ENCODE measurements at regions of chrX and their contacts with region 1.

Region 1: DNA sequence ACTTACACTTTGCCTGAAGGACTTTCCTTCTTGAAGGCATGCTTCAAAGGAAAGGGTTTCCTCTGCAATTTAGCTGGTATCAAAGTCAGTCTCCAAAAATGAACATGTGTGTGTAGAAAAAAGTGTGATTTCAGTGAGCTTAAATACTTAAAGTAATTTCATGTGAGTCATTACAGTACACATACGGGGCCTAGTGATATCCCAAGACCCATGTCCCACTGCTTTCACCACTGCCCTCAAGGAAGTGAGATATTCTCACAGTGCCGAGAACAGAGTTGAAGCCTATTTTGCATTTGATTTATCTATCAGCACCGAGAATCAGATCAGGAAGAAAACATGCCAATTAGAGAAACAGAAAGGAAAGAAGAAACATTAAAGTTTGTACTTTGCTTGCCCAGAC is 61.0 kb downstream of the CHST7 start:
- DNase-seq: no peak
- ATAC-seq: peak; percentile 69
- H3K4me3 ChIP-seq: no peak overlapping the region
- H3K27ac ChIP-seq: peak overlapping the region; percentile 31
- H3K4me1 ChIP-seq: peaks cover 39% of the 10 kb centered on the region
- H3K27me3 ChIP-seq: no peaks in the 10 kb centered on the region
- CTCF ChIP-seq: no peak
- EP300 ChIP-seq: peak in 1 of 2 experiments; percentile 45; a peak in 1 of 4 replicates
- POLR2A ChIP-seq: no peak
- RAD21 ChIP-seq: no peak

Region 2: GRCh38 chrX:46144566-46144965 is 490.0 kb before region 1 on chrX:
- CTCF ChIA-PET with region 1: no interaction called
- POLR2A ChIA-PET with region 1: no interaction called
- RAD21 ChIA-PET with region 1: no interaction called
- SMC1A ChIA-PET with region 1: no interaction called
- in situ Hi-C with region 1: no loop called
- intact Hi-C with region 1: no loop called
- DNase-seq: no peak
- ATAC-seq: no peak
- H3K4me3 ChIP-seq: no peak overlapping the region
- H3K27ac ChIP-seq: no peak overlapping the region
- H3K4me1 ChIP-seq: no peaks in the 10 kb centered on the region
- H3K27me3 ChIP-seq: no peaks in the 10 kb centered on the region
- CTCF ChIP-seq: no peak
- EP300 ChIP-seq: no peak
- POLR2A ChIP-seq: no peak
- RAD21 ChIP-seq: no peak

Region 3: DNA sequence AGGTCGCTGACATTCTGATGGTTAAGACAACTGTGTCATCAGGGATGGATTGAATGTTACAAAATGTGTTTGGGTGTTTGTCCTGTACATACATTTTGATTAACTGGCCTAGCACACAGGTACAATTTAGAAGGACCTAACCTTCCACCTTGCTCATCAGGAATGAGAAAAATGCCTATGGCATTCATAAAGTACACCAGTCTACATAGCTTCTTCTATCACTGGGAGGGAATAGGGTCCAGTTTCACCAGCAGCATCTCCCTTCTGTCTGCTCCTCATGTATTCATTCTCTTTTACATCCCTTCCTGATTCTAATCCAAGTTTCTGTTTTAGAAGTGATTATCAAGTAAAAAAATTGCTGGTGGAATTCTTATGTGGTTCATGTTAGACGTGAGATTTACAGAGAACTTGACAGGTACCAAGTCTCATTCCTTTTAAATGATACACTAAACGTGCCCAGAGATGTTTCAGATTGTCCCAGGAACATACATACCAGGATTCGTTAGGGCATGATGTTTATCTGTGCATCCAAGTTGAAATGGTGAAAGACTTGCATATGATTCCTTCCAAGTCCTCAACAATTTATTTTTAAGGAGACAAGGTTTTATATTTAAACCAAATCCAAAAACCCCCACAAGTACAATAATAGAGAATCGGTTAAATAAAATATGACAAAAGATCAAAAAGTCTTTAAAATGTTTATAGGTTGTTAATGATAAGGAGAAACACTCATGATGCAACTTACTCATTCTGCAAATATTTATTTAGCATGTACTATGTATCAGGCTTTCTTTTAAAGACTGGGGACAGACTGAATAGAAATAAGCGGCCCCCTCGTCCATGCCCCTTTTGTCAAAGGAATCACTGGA is 448.4 kb before region 1 on chrX:
- CTCF ChIA-PET with region 1: no interaction called
- POLR2A ChIA-PET with region 1: no interaction called
- RAD21 ChIA-PET with region 1: no interaction called
- SMC1A ChIA-PET with region 1: no interaction called
- in situ Hi-C with region 1: no loop called
- intact Hi-C with region 1: no loop called
- DNase-seq: no peak
- ATAC-seq: no peak
- H3K4me3 ChIP-seq: no peak overlapping the region
- H3K27ac ChIP-seq: no peak overlapping the region
- H3K4me1 ChIP-seq: no peaks in the 10 kb centered on the region
- H3K27me3 ChIP-seq: no peaks in the 10 kb centered on the region; a peak in 1 of 4 replicates
- CTCF ChIP-seq: no peak
- EP300 ChIP-seq: no peak
- POLR2A ChIP-seq: no peak
- RAD21 ChIP-seq: no peak

Region 4: DNA sequence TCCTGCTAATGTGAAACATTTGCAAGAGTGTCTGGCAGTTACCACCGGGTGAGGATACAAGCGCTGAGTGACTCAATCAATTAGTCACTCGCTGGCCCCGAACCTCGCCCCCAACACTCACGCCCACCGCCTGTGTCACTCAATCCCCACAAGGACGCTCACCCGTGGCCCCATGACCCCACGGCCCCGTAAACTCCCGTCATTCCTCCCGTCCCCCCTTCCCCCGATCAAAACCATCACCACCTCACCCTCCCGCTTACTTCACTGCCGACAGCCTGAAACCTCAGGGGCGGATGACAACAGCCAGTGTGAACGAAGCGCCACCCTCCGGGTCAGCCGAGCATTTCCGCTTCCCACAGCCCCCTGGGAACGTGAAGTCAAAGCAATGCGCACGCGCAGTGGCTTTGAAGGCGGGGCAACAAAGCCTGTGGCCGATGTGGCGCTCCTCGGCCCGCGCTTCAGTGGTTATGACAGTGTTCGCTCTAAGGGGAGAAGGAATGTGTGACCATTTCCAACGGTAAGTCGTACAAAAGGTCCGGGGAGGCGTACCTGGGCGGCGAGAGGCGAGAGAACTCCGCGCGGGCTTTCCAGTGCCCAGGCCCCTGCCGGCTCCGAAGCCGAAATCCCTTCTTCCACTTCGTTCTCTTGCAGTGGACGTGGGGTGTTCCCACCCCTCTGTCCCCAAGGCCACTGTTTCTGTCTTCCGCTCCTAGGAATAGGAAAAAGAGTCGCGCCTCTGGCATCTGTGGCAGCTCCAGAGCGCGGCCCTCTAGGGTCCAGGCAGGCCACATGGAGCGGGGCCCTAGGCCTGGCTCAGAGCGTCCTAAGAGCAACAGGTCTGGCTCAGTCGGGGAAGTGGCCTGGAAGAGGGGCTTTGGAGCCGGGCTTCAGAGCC is 89.2 kb before region 1 on chrX and contains the start of gene ZNF674:
- CTCF ChIA-PET with region 1: no interaction called
- POLR2A ChIA-PET with region 1: no interaction called
- RAD21 ChIA-PET with region 1: no interaction called
- SMC1A ChIA-PET with region 1: no interaction called
- in situ Hi-C with region 1: no loop called
- intact Hi-C with region 1: no loop called
- DNase-seq: peak; percentile 75
- ATAC-seq: peak; percentile 91
- H3K4me3 ChIP-seq: peak within 1 kb of the TSS; percentile 75
- H3K27ac ChIP-seq: peak within 1 kb of the TSS; percentile 86
- H3K4me1 ChIP-seq: peaks cover 4% of the 10 kb centered on the region; the same call in 1 of the 2 replicates
- H3K27me3 ChIP-seq: no peaks in the 10 kb centered on the region
- CTCF ChIP-seq: peak; percentile 26 to 50 (median 46); a peak in 4 of 6 replicates
- EP300 ChIP-seq: peak; percentile 58 to 61; a peak in 3 of 4 replicates
- POLR2A ChIP-seq: peak; percentile 89
- RAD21 ChIP-seq: peak; percentile 41; the same call in 1 of the 2 replicates
- polyA plus RNA-seq, gene ZNF674: 1.0 to 1.2 TPM

Region 5: DNA sequence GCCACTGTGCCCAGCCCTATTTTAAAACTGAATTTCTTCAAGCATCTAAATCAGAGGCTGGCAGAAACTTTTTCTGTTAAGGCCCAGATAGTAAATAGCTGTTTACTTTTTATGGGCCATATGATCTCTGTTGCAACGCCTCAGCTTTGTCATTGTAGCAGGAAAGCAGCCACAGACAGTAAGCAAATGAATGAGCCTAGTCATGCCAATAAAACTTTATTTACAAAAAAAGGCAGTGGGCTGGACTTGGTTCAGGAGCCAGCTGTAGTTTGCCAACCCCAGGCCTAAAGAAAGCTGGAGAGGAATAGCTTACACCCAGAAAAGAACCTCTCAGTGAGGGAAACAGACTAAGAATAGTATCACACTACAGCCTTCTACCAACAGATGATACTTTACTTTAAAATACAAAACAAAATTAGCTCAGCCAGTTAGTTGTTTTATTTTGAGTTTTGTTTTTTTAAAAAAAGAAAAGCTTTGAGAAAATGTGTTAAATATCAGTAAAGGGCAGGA is 35.5 kb before region 1 on chrX:
- CTCF ChIA-PET with region 1: no interaction called
- POLR2A ChIA-PET with region 1: interaction called, 4 read pairs
- RAD21 ChIA-PET with region 1: no interaction called
- SMC1A ChIA-PET with region 1: interaction called, 10 read pairs
- in situ Hi-C with region 1: no loop called
- intact Hi-C with region 1: no loop called
- DNase-seq: no peak
- ATAC-seq: no peak
- H3K4me3 ChIP-seq: no peak overlapping the region
- H3K27ac ChIP-seq: no peak overlapping the region
- H3K4me1 ChIP-seq: peaks cover 7% of the 10 kb centered on the region
- H3K27me3 ChIP-seq: no peaks in the 10 kb centered on the region
- CTCF ChIP-seq: no peak
- EP300 ChIP-seq: no peak
- POLR2A ChIP-seq: no peak
- RAD21 ChIP-seq: no peak

Region 6: GRCh38 chrX:46611658-46612362 is 22.8 kb before region 1 on chrX:
- CTCF ChIA-PET with region 1: no interaction called
- POLR2A ChIA-PET with region 1: no interaction called
- RAD21 ChIA-PET with region 1: no interaction called
- SMC1A ChIA-PET with region 1: no interaction called
- in situ Hi-C with region 1: no loop called
- intact Hi-C with region 1: no loop called
- DNase-seq: no peak
- ATAC-seq: no peak
- H3K4me3 ChIP-seq: no peak overlapping the region
- H3K27ac ChIP-seq: no peak overlapping the region
- H3K4me1 ChIP-seq: no peaks in the 10 kb centered on the region
- H3K27me3 ChIP-seq: no peaks in the 10 kb centered on the region
- CTCF ChIP-seq: no peak
- EP300 ChIP-seq: no peak
- POLR2A ChIP-seq: peak; percentile 38
- RAD21 ChIP-seq: no peak

Measured in GM12878 (cell line).